Activated CD8-positive, alpha-beta T cell treated with anti-CD3 and anti-CD28 coated beads, Interleukin-2, amount 10 ng/mL, durations not matched to agents 7 days and 5 days (primary cell): ENCODE measurements at regions of chr4 and their contacts with region 1.

Region 1: DNA sequence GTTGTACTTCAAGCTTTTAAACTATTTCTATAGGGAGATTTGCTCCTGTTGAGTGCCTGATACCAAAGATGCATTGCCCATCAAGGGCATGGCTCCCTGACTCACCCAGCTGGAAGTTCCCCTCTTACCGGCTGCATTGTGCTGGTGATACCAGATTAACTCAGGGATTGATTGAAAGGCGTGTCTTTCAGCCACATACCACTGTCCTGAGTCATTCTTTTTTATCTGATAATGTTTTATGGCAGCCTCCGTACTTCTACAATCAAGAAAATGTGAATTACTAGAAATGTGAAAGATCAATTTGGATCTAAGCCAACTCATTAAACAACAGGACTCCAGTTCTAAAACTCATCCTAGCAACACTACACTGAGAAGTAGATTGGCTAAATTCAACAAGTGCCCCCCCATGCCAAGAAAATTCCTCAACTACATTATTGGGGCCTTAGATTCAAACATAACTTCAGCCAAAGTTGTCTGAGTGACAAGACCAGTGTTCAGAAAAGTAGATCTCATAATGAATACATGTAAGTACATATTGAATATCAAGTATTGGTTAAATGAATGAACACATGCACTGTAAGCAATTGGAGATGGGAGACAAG is 40.0 kb downstream of the TXK start:
- DNase-seq: no peak
- ATAC-seq: no peak
- H3K4me3 Mint-ChIP-seq: no peak overlapping the region
- H3K27ac Mint-ChIP-seq: no peak overlapping the region
- H3K4me1 Mint-ChIP-seq: no peaks in the 10 kb centered on the region
- H3K27me3 Mint-ChIP-seq: no peaks in the 10 kb centered on the region

Region 2: DNA sequence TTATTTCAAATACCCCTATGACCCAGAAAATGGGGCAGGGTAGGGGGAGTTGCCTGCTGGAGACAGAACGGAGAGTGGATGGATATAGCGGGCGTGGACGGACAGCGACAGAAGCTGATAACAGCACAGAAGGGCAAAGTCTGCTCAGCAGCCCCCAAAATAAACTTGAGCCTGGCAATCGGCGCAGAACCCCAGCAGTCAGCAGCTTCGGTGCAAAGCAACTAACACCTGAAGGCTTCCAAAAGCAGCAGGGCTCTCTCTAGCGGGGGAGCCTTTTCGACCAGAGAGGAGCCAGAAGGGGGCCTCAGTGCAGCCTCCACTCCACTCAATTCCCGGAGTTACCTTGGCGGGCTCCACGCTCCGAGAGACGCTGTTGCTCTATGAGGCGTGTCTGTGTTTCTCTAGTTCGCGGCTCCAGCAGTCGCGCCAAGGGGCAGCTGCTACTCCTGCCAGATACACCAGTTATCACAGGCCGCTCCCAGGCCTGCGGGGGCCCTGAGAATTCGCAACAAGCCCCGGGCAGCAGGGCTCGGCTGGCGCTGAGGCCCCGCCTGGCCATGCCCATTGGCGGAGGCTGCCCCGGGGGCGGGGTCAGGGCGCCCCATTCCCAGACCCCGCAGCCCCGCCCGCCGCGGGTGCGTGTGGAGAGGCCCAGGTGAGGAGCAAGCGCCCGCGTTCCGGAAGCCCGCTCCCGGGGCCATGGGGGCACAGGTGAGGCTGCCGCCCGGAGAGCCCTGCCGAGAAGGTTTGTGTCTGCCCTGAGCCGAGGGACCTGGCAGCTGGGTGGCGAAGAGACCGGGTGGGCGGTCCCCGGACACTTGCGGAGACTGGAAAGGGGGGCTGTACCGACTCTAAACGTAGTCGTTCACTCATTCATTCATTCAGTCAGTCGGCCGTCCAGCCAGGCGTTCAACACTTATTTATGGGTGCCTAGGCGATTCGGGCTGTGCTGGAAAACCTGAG is 77.6 kb before region 1 on chr4 and contains the starts of genes CNGA1 and NIPAL1:
- CTCF ChIA-PET with region 1: no interaction called
- POLR2A ChIA-PET with region 1: no interaction called
- DNase-seq: peak; percentile 66
- ATAC-seq: peak; percentile 95
- H3K4me3 Mint-ChIP-seq: peak within 1 kb of the TSS; percentile 76
- H3K27ac Mint-ChIP-seq: no peak within 1 kb of the TSS
- H3K4me1 Mint-ChIP-seq: peaks cover 9% of the 10 kb centered on the region
- H3K27me3 Mint-ChIP-seq: peaks cover 21% of the 10 kb centered on the region
- total RNA-seq, gene CNGA1: not detected
- total RNA-seq, gene NIPAL1: 1.1 TPM

Region 3: DNA sequence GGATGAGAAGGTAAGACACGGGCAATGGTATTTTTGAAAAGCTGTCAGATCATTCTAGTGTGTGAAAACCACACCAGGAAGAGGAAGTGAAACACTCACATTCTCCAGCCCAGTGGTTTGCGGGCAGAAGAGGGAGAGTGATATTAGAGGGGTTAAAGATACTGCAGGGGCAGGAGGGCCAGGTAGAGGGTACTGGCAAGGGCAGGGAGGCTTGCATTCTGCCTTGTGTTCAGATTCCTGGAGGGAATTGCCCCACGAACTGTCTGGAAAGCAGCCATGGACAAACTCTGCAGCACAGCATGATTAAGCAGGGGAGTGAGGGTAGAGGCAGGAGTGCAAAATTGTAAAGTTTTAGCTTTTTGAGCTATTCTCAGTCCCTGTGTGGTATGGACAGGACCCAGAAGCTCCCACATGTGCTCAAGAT is 46.6 kb before region 1 on chr4:
- CTCF ChIA-PET with region 1: no interaction called
- POLR2A ChIA-PET with region 1: no interaction called
- DNase-seq: peak; percentile 91
- ATAC-seq: peak; percentile 92
- H3K4me3 Mint-ChIP-seq: peak overlapping the region; percentile 62
- H3K27ac Mint-ChIP-seq: peak overlapping the region; percentile 77
- H3K4me1 Mint-ChIP-seq: peaks cover 56% of the 10 kb centered on the region
- H3K27me3 Mint-ChIP-seq: peaks cover 27% of the 10 kb centered on the region

Region 4: GRCh38 chr4:48109413-48110263 is 15.6 kb after region 1 on chr4:
- CTCF ChIA-PET with region 1: interaction called, 12 read pairs
- POLR2A ChIA-PET with region 1: no interaction called
- DNase-seq: peak; percentile 57
- ATAC-seq: peak; percentile 73
- H3K4me3 Mint-ChIP-seq: no peak overlapping the region
- H3K27ac Mint-ChIP-seq: no peak overlapping the region
- H3K4me1 Mint-ChIP-seq: peaks cover 43% of the 10 kb centered on the region
- H3K27me3 Mint-ChIP-seq: no peaks in the 10 kb centered on the region

Region 5: DNA sequence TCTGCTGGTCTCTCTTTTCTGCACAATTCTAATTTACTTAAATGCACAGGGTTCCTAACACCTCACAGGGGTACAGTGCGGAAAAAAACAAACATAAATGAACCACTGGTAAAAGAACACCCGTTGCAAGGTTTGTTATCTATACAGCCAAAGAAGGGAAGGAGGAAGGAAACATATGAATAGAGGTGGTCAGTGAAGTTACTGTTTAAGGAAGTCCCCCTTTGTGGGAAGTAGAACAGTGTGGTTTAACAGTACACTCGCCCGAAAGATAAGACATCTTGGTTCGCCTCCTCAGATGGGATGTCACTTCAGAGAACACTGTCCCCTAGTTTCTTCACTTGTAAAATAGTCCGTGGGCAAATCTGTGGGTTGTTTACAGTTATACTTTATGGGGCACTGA is 118.1 kb after region 1 on chr4:
- CTCF ChIA-PET with region 1: no interaction called
- POLR2A ChIA-PET with region 1: no interaction called
- DNase-seq: no peak
- ATAC-seq: peak; percentile 70
- H3K4me3 Mint-ChIP-seq: peak overlapping the region; percentile 31
- H3K27ac Mint-ChIP-seq: peak overlapping the region; percentile 66
- H3K4me1 Mint-ChIP-seq: peaks cover 32% of the 10 kb centered on the region
- H3K27me3 Mint-ChIP-seq: no peaks in the 10 kb centered on the region

Region 6: DNA sequence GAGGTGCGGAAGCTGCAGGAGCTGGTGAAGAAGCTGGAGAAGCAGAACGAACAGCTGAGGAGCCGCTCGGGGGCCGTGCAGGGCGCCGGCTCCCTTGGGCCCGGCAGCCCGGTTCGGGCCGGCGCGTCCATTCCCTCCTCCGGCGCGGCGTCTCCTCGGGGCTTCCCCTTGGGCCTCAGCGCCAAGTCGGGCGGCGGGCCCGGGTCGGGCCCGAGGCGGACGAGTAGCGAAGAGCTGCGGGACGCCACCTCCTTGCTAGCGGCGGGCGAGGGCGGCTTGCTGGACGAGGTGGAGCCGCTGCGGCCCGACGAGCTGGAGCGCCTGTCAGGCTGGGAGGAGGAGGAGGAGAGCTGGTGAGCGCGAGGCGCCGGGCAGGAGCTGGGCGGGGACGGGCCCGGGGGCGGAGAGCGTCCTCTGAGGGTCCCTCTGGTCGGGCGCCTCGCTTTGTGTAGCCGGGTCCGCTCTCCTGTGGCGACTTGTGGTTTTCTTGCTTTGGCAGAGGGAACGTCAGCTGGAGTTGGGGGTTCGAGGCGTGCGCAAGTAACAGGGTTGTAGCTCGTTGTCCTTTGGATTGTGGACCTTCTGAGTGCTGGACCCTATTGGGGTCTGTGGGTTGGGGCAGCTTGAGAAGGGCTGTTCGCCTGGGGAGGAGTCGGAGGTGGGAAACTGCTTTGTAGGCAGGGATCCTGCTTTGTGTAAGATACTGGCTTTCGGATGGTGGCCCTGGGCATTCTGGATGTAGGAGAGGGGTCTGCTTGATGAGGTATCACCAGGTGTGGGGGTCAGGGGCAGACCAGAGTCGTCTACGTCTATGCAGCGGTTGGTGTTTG is 247.9 kb after region 1 on chr4:
- CTCF ChIA-PET with region 1: no interaction called
- POLR2A ChIA-PET with region 1: no interaction called
- DNase-seq: peak; percentile 54
- ATAC-seq: peak; percentile 28
- H3K4me3 Mint-ChIP-seq: peak overlapping the region; percentile 96
- H3K27ac Mint-ChIP-seq: peak overlapping the region; percentile 95
- H3K4me1 Mint-ChIP-seq: peaks cover 49% of the 10 kb centered on the region
- H3K27me3 Mint-ChIP-seq: no peaks in the 10 kb centered on the region